Left ventricle myocardium inferior (tissue), 1 donor: ENCODE measurements at regions of chr16 and their contacts with region 1.

Region 1: GRCh38 chr16:20900299-20901067 is at the starts of genes DCUN1D3 and LYRM1:
- DNase-seq: peak; percentile 96
- H3K4me3 ChIP-seq: peak within 1 kb of the TSS; percentile 92
- H3K27ac ChIP-seq: peak within 1 kb of the TSS; percentile 99
- H3K4me1 ChIP-seq: peaks cover 93% of the 10 kb centered on the region
- H3K27me3 ChIP-seq: no peaks in the 10 kb centered on the region
- CTCF ChIP-seq: no peak
- total RNA-seq, gene DCUN1D3: 9.8 TPM
- total RNA-seq, gene LYRM1: 45.4 TPM

Region 2: GRCh38 chr16:20859699-20860098 is 40.8 kb before region 1 on chr16:
- intact Hi-C with region 1: loop called (anchors 5 kb)
- DNase-seq: peak; percentile 19
- H3K4me3 ChIP-seq: no peak overlapping the region
- H3K27ac ChIP-seq: peak overlapping the region; percentile 85
- H3K4me1 ChIP-seq: peaks cover 75% of the 10 kb centered on the region
- H3K27me3 ChIP-seq: no peaks in the 10 kb centered on the region
- CTCF ChIP-seq: no peak